BJ (cell line): ENCODE measurements at regions of chr5 and their contacts with region 1.

Region 1: DNA sequence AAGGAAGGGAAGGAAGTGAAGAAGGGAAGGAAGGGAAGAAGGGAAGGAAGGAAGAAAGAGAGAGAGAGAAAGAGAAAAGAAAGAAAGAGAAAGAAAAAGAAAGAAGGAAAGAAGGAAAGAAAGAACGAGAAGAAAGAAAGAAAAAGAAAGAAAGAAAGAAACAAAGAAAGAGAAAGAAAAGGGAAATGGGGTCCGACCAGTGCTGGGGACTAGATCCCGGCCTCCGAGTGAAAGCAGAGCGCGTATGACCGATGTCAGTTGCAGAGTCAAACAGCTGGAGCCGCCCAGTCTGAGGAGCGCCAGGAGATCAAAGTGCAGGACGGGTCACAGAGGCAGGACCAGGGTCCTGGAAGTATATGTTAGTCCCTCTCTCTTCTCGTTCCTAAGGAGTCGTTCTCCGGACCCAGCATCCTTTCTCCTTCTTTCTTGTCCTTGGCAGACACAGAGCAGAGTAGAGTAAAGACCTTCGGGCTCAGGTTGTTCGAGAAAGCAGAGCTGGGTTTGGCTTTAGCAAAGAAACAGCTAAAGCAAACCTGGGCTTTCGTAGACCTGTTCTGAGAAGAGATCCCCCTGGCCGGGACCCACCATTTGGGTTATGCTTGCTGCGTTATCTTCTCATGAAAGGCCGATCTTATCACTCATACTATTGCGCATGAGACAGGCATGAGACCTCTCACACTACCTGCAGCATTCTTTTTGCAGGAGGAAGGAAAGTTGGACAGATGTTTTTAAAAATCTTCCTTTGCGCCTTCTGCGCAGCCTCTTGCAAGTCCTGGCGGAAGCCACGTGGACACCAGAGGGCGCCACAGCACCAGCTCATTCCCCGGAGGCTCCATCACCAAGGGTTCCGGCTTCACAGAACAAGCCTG is 305.2 kb upstream of the MSX2 start:
- DNase-seq: peak; percentile 55
- H3K4me3 ChIP-seq: peak overlapping the region; percentile 33
- H3K27me3 ChIP-seq: no peaks in the 10 kb centered on the region; the same call in none of the 2 replicates
- CTCF ChIP-seq: peak; percentile 98

Region 2: DNA sequence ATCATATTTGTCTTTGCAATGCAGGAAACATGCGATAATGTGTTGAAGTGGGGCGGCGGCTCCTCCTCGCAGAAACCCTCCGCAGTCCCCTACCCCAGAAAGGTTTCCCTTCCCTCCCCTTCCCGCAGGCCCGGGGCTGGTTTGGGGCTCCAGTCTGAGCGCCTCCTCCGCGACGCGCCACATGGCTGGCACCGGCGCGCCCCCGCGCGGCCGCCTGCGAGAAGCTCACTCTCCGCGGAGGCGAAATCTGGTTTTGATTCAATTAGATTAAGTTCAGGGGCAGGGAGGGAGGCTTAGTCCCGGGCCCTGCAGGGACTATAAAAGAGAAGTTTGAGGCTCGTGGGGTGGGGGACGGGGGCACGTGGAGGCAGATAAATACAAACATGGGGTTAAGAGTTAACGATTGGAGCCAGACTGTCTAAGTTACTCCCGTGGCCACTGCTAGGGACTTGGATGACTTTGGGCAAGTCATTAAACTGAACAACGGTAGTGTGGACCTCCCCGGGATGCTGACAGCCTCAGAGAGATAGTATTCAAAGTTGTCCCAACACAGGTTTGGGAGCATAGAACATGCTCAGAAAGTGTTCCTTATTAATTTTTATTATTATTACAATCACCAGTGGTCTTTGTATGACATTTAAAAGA is 374.6 kb after region 1 on chr5:
- CTCF ChIA-PET with region 1: interaction called, 43 read pairs
- POLR2A ChIA-PET with region 1: no interaction called
- DNase-seq: no peak
- H3K4me3 ChIP-seq: no peak overlapping the region
- H3K27me3 ChIP-seq: no peaks in the 10 kb centered on the region
- CTCF ChIP-seq: peak; percentile 83

Region 3: DNA sequence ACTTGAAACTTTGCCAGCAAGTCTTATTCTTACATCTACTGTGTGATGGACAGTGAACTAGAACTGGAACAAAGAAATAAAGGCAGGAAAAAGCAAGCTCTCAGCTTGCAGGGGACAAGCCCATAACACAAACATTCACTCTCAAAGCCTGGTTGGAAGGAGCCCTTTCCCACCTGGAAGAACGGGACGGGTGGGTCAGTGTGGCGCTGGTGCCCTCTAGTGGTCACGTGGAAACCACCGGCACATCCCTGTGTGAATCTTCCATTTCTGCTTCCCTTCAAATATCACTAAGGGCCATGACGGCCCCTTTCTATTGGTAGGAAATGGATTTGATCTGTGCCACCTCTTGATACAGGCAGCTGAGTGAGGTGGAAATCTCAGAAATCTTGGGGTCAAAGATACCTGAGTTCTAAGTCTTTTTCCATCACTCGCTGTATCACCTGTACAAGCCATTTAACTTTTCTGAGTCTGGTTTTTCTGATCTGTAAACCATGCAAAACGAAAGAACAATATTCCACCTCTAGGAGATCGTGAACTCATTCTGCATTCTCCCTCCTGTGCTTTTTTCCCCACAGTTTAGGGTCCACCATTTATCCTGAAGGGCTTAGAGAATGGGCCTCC is 516.8 kb after region 1 on chr5:
- CTCF ChIA-PET with region 1: interaction called, 26 read pairs
- POLR2A ChIA-PET with region 1: interaction called, 4 read pairs
- DNase-seq: no peak
- H3K4me3 ChIP-seq: no peak overlapping the region
- H3K27me3 ChIP-seq: no peaks in the 10 kb centered on the region
- CTCF ChIP-seq: peak; percentile 92